GM23248 (cell line): ENCODE measurements at regions of chr17 and their contacts with region 1.

Region 1: DNA sequence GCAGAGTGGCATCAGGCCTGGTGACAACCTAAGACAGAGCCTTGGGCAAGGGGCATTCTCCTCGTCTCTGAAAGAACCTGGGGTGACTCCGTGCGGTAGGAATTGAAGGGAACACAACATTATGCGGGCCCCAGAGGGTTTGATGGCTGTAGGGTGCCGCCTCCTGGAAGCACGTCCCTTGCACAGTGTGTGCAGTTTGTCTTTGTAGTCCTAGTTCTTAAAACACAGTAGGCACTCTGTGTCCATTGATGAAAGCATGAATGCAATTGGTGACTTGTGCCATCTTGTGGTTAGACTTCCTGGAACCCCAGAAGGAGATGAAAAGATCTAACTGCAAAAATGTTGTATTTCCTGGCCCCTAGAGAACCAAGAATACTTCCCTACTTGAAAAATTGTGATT is 279.8 kb downstream of the UTP18 start:
- DNase-seq: no peak
- H3K4me3 ChIP-seq: no peak overlapping the region
- H3K27ac ChIP-seq: no peak overlapping the region
- H3K4me1 ChIP-seq: no peaks in the 10 kb centered on the region
- H3K27me3 ChIP-seq: no peaks in the 10 kb centered on the region

Region 2: GRCh38 chr17:51322390-51323029 is 217.6 kb before region 1 on chr17:
- in situ Hi-C with region 1: loop called (anchors 25 kb)
- DNase-seq: peak; percentile 46
- H3K4me3 ChIP-seq: no peak overlapping the region
- H3K27ac ChIP-seq: no peak overlapping the region
- H3K4me1 ChIP-seq: no peaks in the 10 kb centered on the region
- H3K27me3 ChIP-seq: no peaks in the 10 kb centered on the region